Psoas muscle (tissue), 8 donors: ENCODE measurements at regions of chr9 and their contacts with region 1.

Region 1: DNA sequence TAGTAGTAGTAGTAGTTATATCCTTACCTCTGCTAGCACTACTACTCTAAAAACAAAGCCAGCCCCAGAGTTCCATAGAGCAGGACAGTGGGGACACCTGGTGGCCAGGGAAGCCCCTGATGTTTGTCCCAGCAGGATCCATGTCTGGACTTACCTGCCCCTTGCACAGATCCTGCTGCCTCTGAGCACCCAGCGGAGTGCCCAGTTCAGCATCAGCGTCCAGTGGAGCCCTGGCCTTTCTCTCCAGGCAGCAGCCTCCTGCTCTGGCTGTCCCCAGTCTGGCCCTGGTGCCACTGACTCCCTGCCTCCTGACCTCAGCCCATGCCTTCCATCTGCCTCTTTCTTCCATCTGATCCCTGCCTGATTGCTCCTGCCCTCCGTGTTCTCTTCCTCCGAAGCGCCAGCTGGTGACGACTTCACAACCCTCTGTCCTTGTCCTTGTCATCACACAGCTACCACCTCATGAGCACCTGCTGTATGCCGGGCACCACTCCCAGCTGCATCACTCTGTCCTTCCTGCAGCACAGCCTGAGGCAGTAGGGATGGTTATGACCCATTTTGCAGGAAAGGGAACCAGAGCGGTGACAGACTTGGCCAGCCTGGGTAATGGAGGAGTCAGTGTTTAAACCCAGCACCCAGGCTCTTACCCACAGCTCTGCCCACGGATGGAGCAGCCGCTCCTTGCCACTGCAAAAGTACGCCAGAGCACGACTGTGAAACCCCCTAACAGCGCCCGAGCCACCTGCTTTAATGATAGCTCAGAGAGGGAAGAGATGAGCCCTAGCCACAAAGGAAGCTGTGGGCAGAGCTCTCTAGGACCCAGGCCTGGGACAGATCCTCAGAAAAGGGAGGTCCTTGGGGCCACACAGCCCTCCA is 11.5 kb downstream of the SARDH start:
- DNase-seq: peak in 1 of 2 donors; percentile 59
- ATAC-seq: peak in 3 of 4 donors; percentile 44 to 66 (median 54)
- H3K4me3 ChIP-seq: no peak overlapping the region
- H3K27ac ChIP-seq: no peak overlapping the region
- H3K4me1 ChIP-seq: no peaks in the 10 kb centered on the region
- H3K27me3 ChIP-seq: peaks cover 0 to 3% (median 1%) of the 10 kb centered on the region in 3 donors
- CTCF ChIP-seq: peak; percentile 47

Region 2: DNA sequence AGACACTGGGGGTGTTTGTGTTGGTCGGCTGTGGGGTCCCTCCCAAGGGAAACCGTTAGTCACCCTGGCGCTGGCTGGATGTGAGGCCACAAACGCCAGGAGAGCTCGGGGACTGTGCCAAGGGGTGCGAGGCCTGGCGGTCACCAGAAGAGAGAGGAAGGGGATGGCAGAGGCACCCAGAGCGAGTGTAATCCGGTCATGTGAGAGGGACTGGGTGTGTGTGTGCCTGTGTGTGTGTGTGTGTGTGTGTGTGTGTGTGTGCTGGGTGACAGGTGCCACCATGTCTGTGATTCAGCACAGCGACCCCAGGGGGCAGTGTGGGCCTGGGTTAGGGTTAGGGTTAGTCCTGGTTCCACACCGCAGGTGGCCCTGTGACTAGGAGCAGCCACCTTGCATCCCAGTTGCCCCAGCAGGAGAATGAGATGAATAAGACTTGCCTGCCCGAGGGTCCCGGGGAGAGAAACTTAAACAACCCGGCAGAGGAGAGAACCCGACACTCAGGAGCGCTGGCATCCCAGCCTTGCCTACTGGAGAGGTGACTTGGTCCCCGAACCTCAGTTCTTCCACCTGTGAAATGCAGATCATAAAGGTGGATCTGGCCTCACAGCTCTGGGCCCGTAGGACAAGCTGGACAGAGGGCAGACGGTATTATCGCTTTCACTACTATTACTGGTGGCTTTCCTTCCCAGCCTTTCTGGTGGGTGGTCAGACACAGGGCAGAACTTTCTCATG is 193.5 kb before region 1 on chr9:
- intact Hi-C with region 1: loop called (anchors 5 to 10 kb)
- DNase-seq: peak; percentile 68 to 83
- ATAC-seq: peak; percentile 38 to 62 (median 46)
- H3K4me3 ChIP-seq: no peak overlapping the region
- H3K27ac ChIP-seq: no peak overlapping the region
- H3K4me1 ChIP-seq: peaks cover 8% of the 10 kb centered on the region
- H3K27me3 ChIP-seq: peaks cover 0 to 67% (median 8%) of the 10 kb centered on the region in 3 donors
- CTCF ChIP-seq: peak; percentile 27

Region 3: DNA sequence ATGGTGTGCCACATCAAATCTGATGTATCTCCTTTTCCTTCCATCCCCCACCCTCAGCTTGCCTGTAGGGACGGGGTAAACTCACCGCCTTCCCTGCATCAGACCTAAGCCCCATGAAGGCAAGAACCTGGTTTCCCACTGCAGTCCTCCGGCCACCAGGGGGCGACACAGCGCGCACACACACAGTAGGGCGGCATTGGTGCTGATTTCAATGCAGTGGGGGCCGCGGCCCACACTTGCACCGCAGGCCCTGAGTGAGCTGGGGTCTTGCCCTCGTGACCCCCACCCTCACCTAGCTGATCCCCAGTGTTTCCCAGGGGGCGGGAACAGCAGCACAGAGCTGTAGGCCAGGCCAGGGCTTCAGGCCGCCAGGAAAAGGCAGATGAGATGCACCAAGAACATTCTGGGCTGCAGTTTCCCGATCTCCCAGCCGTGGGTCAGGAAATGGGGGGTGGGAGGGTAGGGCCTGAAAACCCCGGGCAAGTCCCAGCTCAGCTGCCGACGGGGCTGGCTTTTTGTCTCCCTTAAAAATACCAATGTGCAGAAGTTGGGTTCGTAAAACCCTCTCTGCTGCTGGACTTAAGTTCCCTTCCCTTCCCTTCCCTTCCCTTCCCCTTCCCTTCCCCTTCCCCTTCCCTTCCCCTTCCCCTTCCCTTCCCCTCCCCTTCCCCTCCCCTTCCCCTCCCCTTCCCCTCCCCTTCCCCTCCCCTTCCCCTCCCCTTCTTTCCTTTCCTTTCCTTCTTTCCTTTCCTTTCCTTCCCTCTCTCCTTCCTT is 137.0 kb before region 1 on chr9:
- intact Hi-C with region 1: loop called in 1 of 2 experiments (anchors 5 kb)
- DNase-seq: no peak
- ATAC-seq: no peak
- H3K4me3 ChIP-seq: no peak overlapping the region
- H3K27ac ChIP-seq: no peak overlapping the region
- H3K4me1 ChIP-seq: peaks cover 3% of the 10 kb centered on the region
- H3K27me3 ChIP-seq: peaks cover 0 to 54% (median 17%) of the 10 kb centered on the region in 3 donors
- CTCF ChIP-seq: peak; percentile 16

Region 4: GRCh38 chr9:133768859-133769425 is 42.3 kb after region 1 on chr9:
- intact Hi-C with region 1: no loop called
- DNase-seq: peak in 1 of 2 donors; percentile 16
- ATAC-seq: no peak
- H3K4me3 ChIP-seq: no peak overlapping the region
- H3K27ac ChIP-seq: no peak overlapping the region
- H3K4me1 ChIP-seq: no peaks in the 10 kb centered on the region
- H3K27me3 ChIP-seq: no peaks in the 10 kb centered on the region
- CTCF ChIP-seq: no peak